ENCODE measurements at regions of chr13 and their contacts with region 1.

Region 1: DNA sequence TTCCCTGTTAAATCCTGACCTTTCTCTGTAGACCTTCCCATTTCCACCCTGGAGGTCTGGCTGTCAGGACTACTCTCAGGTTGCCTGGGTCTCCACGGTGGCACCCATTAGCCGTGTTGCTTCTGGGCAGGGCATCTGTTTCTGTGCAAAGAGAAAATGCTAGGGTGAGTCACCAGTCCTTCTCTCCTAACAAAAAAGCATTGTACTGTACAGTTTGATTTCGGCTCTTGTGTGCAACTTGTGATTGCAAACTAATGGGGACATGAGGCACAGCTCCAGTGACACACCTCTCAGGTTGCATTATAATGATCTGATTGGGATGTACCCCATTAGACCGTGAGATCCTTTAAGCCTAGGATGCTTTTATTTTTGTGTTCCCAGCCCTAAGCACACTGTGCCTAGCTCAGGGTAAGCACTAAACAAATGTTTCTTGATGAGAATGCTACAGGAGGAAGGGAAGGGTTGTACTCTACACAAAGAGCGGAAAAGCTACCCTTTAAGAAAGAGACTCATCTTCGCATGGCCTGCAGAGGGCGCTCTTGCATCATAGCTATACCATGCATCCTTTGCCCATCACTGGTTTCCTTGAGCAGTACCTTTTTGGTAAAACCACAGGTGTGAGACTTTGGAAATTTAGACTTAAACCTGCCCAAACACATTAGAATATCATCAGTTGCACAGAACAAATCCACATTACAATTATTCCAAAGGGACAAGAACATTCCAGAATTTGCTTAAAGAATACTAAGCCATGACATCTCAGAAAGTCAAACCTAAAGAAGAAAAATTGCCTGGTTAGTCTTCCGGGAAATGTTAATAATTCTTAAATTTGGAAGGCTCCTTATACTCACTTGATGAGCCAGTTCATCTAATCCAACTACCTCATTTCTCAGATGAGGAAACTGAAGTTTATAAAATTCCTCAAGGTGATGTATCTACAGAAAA is 20.3 kb upstream of the TRIM13 start:
- DNase-seq: peak; percentile 53 to 83 (median 65)
- ATAC-seq: peak; percentile 94
- H3K4me3 ChIP-seq: no peak overlapping the region
- H3K27ac ChIP-seq: no peak overlapping the region
- H3K4me1 ChIP-seq: peaks cover 0 to 5% of the 10 kb centered on the region in 2 donors
- H3K27me3 ChIP-seq: no peaks in the 10 kb centered on the region
- CTCF ChIP-seq: peak; percentile 80 to 86

Region 2: GRCh38 chr13:49806126-49806536 is 170.5 kb before region 1 on chr13:
- intact Hi-C with region 1: no loop called
- DNase-seq: no peak
- ATAC-seq: peak; percentile 25
- H3K4me3 ChIP-seq: no peak overlapping the region
- H3K27ac ChIP-seq: no peak overlapping the region
- H3K4me1 ChIP-seq: no peaks in the 10 kb centered on the region
- H3K27me3 ChIP-seq: no peaks in the 10 kb centered on the region
- CTCF ChIP-seq: no peak

Region 3: DNA sequence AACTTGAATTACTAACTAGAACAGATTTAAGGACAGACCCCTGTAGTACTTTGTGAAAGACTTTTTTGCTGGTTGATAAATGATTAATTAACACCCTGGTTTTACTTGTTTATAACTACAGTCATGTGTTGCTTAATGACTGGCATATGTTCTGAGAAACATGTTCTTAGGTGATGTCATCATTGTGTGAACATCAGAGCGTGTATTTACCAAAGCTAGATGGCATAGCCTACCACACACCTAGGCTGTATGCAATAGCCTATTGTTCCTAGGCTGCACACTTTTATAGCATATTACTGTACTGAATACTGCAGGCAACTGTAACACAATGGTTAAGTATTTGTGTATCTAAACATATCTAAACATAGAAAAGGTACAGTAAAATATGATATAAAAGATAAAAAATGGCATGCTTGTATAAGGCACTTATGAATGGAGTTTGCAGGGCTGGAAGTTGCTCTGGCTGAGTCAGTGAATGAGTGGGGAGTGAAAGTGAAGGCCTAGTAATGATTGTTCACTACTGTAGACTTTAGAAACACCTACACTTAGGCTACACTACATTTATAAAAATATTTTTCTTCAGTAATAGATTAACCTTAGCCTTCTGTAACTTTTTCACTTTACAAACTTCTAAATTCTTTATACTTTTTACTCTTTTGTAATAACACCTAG is 298.9 kb after region 1 on chr13:
- intact Hi-C with region 1: no loop called
- DNase-seq: peak in 1 of 4 donors; percentile 21
- ATAC-seq: peak; percentile 80
- H3K4me3 ChIP-seq: no peak overlapping the region
- H3K27ac ChIP-seq: no peak overlapping the region
- H3K4me1 ChIP-seq: no peaks in the 10 kb centered on the region
- H3K27me3 ChIP-seq: no peaks in the 10 kb centered on the region
- CTCF ChIP-seq: no peak

Region 4: DNA sequence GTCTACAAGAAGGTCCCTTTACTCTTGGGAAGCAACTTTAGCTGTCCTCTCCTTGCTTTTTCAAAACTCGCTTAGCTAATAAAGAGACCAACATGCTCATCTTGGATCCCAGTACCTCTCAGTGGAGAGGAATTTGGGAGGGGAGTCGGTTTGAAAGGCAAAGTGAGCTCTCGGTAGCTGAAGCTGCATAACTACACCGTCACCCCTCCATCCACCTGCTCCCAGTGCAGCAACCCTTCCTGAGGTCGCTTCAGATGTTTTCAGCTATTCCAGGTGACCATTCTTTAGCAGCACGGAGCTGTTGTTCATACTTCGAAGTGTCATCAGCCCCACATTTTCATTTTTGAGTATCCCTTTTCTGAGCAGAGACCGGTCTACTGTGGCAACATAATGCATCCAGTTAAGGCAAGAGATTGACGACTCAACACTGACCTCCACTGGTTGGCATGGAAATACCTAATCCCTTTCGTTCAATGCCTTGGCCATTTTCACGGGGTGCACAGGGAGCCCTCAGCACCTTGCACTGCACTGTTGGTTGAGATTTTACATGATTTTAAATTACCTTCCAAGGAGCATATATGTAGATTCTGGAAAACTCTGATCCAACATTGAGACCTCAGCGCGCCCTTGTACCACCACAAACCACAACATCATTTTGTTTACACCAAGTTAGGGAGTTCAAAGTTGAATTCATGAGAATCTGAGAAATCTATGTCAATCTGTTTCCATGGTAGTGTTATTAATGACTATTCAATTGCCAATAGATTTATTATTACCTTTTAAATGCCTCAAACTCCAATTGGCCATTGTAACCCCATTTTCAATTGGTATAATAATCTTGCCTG is 824.7 kb after region 1 on chr13:
- intact Hi-C with region 1: loop called in 1 of 2 experiments (anchors 5 kb)
- DNase-seq: peak in 3 of 4 donors; percentile 44 to 85 (median 61)
- ATAC-seq: peak; percentile 99
- H3K4me3 ChIP-seq: no peak overlapping the region
- H3K27ac ChIP-seq: no peak overlapping the region
- H3K4me1 ChIP-seq: peaks cover 6 to 21% of the 10 kb centered on the region in 2 donors
- H3K27me3 ChIP-seq: no peaks in the 10 kb centered on the region
- CTCF ChIP-seq: peak; percentile 68 to 75

Region 5: GRCh38 chr13:50911937-50912795 is 935.6 kb after region 1 on chr13:
- intact Hi-C with region 1: loop called in 1 of 2 experiments (anchors 10 kb)
- DNase-seq: peak; percentile 84 to 93 (median 90)
- ATAC-seq: peak; percentile 69
- H3K4me3 ChIP-seq: peak overlapping the region in 1 of 2 donors; percentile 88
- H3K27ac ChIP-seq: peak overlapping the region in 1 of 2 donors; percentile 94
- H3K4me1 ChIP-seq: peaks cover 25 to 79% of the 10 kb centered on the region in 2 donors
- H3K27me3 ChIP-seq: no peaks in the 10 kb centered on the region
- CTCF ChIP-seq: peak; percentile 84 to 89

Measured in left lung (tissue), 14 donors.